K562 (cell line): ENCODE measurements at regions of chr2 and their contacts with region 1.

Region 1: GRCh38 chr2:100301881-100302584 is 20.3 kb downstream of the LONRF2 start:
- DNase-seq: no peak
- ATAC-seq: no peak
- H3K4me3 ChIP-seq: no peak overlapping the region
- H3K27ac ChIP-seq: no peak overlapping the region
- H3K4me1 ChIP-seq: no peaks in the 10 kb centered on the region; a peak in 1 of 5 replicates
- H3K27me3 ChIP-seq: no peaks in the 10 kb centered on the region
- CTCF ChIP-seq: no peak
- EP300 ChIP-seq: no peak
- POLR2A ChIP-seq: no peak
- RAD21 ChIP-seq: no peak

Region 2: GRCh38 chr2:98518090-98518489 is 1783.9 kb before region 1 on chr2:
- CTCF ChIA-PET with region 1: no interaction called
- POLR2A ChIA-PET with region 1: no interaction called
- in situ Hi-C with region 1: no loop called
- intact Hi-C with region 1: no loop called
- DNase-seq: peak; percentile 44 to 64 (median 54)
- ATAC-seq: peak; percentile 80
- H3K4me3 ChIP-seq: no peak overlapping the region
- H3K27ac ChIP-seq: no peak overlapping the region
- H3K4me1 ChIP-seq: peaks cover 11 to 20% of the 10 kb centered on the region in 2 experiments; a peak in 4 of 5 replicates
- H3K27me3 ChIP-seq: no peaks in the 10 kb centered on the region
- CTCF ChIP-seq: peak; percentile 70 to 98 (median 97)
- EP300 ChIP-seq: no peak
- POLR2A ChIP-seq: no peak
- RAD21 ChIP-seq: peak in 1 of 2 experiments; percentile 75; a peak in 2 of 4 replicates

Region 3: GRCh38 chr2:100291120-100291970 is 10.7 kb before region 1 on chr2:
- CTCF ChIA-PET with region 1: no interaction called
- POLR2A ChIA-PET with region 1: interaction called, 13 read pairs
- in situ Hi-C with region 1: no loop called
- intact Hi-C with region 1: no loop called
- DNase-seq: peak; percentile 90 to 98 (median 92)
- ATAC-seq: peak; percentile 94
- H3K4me3 ChIP-seq: no peak overlapping the region
- H3K27ac ChIP-seq: peak overlapping the region; percentile 94
- H3K4me1 ChIP-seq: peaks cover 20 to 40% of the 10 kb centered on the region in 2 experiments
- H3K27me3 ChIP-seq: no peaks in the 10 kb centered on the region
- CTCF ChIP-seq: 0 out of 6 replicates have a peak, but pooled peaks of 1 of the 3 experiments have one; percentile 12
- EP300 ChIP-seq: peak; percentile 93
- POLR2A ChIP-seq: peak; percentile 54
- RAD21 ChIP-seq: peak; percentile 5 to 45; a peak in 2 of 4 replicates